Right lobe of liver (tissue), 6 donors: ENCODE measurements at regions of chr14 and their contacts with region 1.

Region 1: DNA sequence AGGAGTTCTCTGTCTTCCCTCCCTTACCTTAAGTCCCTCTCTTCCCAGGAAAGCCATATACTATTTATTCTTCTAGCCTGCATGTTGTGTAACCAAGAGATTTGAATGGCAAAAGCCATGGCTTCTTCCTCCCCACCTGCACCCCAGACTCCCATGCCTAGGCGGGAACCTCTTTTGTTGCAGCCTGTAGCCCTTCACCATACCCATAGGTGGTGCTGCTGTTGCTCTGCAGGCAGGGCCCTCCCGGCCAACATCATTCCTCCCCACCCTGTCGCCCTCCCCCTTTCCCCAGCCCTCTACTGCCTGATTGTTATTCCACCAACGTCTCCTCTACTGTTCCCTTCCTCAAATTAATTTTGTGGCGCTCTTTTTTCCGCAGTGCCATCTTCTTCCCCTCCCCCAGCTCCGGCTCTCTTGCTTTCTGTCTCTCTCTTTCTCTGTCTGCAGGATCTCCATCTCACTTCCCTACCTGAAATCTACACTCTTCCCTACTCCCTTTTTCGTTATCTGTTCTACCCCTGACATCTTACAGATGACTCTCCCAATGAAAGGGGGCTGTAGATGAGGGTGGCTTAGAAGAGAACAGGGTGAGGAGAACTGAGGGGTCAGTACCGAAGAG is 13.8 kb downstream of the NGDN start:
- DNase-seq: no peak
- ATAC-seq: no peak
- H3K4me3 ChIP-seq: no peak overlapping the region
- H3K27ac ChIP-seq: no peak overlapping the region
- H3K4me1 ChIP-seq: no peaks in the 10 kb centered on the region
- H3K27me3 ChIP-seq: no peaks in the 10 kb centered on the region
- CTCF ChIP-seq: no peak
- POLR2A ChIP-seq: no peak

Region 2: DNA sequence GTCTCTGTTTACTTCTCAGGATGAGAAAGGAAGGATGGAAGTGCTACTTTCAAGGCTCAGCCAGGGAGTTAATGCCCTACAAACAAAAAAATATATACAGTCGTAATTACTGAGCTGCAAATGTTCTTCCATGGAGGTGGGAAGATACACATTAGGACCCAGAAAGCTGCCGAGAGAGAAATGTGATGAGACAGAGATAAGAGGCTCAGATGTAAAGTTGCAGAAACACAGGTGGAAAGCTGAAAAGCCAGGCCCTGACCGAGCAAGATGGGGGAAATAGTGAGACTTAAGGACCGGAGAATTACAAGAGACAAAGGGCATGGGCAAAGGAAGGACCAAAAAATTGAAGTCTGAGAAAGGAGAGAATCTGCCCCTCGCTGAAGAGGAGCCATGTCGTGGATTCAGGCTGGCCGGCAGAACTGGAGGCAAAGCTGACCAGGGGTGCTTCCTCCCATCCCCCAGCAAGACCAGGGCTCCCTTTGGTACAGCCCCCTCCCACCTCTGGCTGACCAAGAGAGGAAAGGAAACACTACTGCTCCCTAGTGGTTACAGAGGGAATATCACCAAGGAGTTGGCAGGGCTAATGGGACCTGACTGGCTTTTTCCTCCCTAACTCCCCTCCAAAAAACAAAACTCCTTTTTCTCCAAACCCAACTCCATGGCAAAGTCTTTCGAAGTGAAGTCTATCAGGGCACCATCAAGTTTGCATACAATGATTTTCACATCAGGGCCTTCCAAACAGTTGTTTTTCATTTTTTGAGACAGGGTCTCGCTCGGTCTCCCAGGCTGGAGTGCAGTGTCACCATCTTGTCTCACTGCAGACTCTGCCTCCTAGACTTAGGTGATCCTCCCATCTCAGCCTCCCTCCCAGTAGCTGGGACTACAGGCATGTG is 56.1 kb after region 1 on chr14:
- intact Hi-C with region 1: loop called in 1 of 2 experiments (anchors 10 kb)
- DNase-seq: no peak
- ATAC-seq: peak; percentile 70 to 85 (median 80)
- H3K4me3 ChIP-seq: no peak overlapping the region
- H3K27ac ChIP-seq: no peak overlapping the region
- H3K4me1 ChIP-seq: no peaks in the 10 kb centered on the region
- H3K27me3 ChIP-seq: no peaks in the 10 kb centered on the region
- CTCF ChIP-seq: peak; percentile 42 to 79 (median 74)
- POLR2A ChIP-seq: no peak